ENCODE measurements at regions of chr12 and their contacts with region 1.

Region 1: GRCh38 chr12:76348079-76348901 is at the start of gene BBS10:
- DNase-seq: peak; percentile 92
- H3K4me3 Mint-ChIP-seq: peak within 1 kb of the TSS; percentile 86
- H3K27ac Mint-ChIP-seq: peak within 1 kb of the TSS; percentile 39
- H3K4me1 Mint-ChIP-seq: peaks cover 17% of the 10 kb centered on the region
- H3K27me3 Mint-ChIP-seq: no peaks in the 10 kb centered on the region
- CTCF ChIP-seq: peak; percentile 40
- total RNA-seq, gene BBS10: 5.9 and 10.2 TPM in 2 replicates

Region 2: DNA sequence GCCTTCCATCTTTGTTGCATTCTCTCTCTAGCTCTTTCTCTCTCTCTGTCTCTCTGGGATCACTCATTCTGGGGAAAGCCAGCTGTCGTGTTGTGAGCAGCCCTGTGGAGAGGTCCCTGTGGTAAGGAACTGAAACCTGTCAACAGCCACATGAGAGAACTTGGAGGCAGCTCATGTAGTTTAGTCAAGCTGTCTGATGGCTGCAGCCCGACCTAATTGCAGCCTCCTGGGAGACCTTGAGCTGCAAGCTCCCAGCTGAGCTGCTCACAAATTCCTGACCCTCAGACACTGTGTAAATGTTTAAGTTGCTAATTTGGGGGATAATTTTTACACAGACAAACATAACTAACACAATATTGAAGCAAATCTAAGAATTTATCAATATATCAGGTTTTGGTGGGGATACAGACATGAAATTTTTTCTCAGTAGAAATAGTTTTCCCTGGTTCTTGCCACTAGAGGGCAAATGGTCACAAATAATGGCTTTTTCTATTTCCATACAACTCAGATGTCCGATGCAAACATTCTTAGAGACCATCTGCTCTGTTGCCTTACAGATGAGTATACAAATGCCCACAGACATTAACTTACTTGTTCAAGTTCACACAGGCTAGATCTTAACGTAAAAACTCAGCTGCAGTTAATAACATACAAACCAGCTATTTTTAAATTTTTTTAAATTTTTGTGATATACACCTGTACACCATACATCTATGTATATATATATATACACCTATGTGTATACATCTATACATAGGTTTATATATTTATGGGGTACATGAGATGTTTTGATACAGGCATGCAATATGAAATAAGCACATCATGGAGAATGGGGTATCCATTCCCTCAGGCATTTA is 821.4 kb before region 1 on chr12:
- CTCF ChIA-PET with region 1: interaction called, 13 read pairs
- POLR2A ChIA-PET with region 1: interaction called, 3 read pairs
- intact Hi-C with region 1: loop called (anchors 1 kb)
- DNase-seq: peak; percentile 59
- H3K4me3 Mint-ChIP-seq: no peak overlapping the region
- H3K27ac Mint-ChIP-seq: no peak overlapping the region
- H3K4me1 Mint-ChIP-seq: no peaks in the 10 kb centered on the region
- H3K27me3 Mint-ChIP-seq: no peaks in the 10 kb centered on the region
- CTCF ChIP-seq: peak; percentile 55

Region 3: DNA sequence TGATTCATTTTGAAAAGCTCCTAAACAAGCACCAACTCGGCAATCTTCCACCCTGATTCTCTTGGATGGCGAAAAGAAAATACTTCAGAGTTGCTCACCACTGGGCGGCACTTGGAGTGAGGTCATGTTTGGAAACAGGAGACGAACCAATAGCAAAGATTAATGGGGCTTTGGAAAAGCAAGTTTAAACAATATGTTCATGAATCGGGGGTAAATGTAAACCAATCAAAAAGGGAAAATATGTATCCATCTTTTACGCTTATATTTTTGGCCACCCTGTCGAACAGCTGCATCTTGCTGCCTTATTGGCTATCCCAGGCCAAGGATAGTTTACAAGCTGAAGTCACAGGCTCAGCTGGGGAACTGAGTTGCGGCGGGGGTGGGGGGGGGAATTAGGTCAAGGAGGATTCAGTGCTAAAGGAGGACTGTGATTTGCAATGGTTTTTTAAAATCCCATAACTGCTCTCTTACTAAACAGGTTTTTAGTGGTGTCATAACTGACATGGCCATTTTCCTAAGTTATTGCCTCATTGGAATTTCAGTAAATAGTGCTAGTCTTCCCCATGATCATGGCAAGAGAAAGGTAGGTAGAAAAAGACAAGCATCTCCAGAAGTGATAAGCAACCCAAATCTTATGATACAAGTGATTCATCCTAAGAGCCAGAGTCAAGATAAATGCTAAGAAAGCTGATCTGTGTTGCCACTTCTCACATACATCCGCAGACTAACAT is 527.3 kb before region 1 on chr12:
- CTCF ChIA-PET with region 1: interaction called, 4 read pairs
- POLR2A ChIA-PET with region 1: no interaction called
- intact Hi-C with region 1: loop called (anchors 1 kb)
- DNase-seq: peak; percentile 84
- H3K4me3 Mint-ChIP-seq: no peak overlapping the region
- H3K27ac Mint-ChIP-seq: no peak overlapping the region
- H3K4me1 Mint-ChIP-seq: peaks cover 17% of the 10 kb centered on the region
- H3K27me3 Mint-ChIP-seq: no peaks in the 10 kb centered on the region
- CTCF ChIP-seq: peak; percentile 21

Region 4: GRCh38 chr12:76083904-76084862 is 264.1 kb before region 1 on chr12 and contains the start of gene NAP1L1:
- CTCF ChIA-PET with region 1: interaction called, 10 read pairs
- POLR2A ChIA-PET with region 1: interaction called, 50 read pairs
- intact Hi-C with region 1: loop called (anchors 1 kb)
- DNase-seq: peak; percentile 98
- H3K4me3 Mint-ChIP-seq: peak within 1 kb of the TSS; percentile 86
- H3K27ac Mint-ChIP-seq: peak within 1 kb of the TSS; percentile 86
- H3K4me1 Mint-ChIP-seq: peaks cover 20% of the 10 kb centered on the region
- H3K27me3 Mint-ChIP-seq: no peaks in the 10 kb centered on the region
- CTCF ChIP-seq: no peak
- total RNA-seq, gene NAP1L1: 327 and 493 TPM in 2 replicates

Region 5: GRCh38 chr12:76266797-76267196 is 81.5 kb before region 1 on chr12:
- CTCF ChIA-PET with region 1: interaction called, 4 read pairs
- POLR2A ChIA-PET with region 1: interaction called, 16 read pairs
- intact Hi-C with region 1: no loop called
- DNase-seq: peak; percentile 74
- H3K4me3 Mint-ChIP-seq: peak overlapping the region; percentile 41
- H3K27ac Mint-ChIP-seq: peak overlapping the region; percentile 91
- H3K4me1 Mint-ChIP-seq: peaks cover 43% of the 10 kb centered on the region
- H3K27me3 Mint-ChIP-seq: no peaks in the 10 kb centered on the region
- CTCF ChIP-seq: no peak

Region 6: DNA sequence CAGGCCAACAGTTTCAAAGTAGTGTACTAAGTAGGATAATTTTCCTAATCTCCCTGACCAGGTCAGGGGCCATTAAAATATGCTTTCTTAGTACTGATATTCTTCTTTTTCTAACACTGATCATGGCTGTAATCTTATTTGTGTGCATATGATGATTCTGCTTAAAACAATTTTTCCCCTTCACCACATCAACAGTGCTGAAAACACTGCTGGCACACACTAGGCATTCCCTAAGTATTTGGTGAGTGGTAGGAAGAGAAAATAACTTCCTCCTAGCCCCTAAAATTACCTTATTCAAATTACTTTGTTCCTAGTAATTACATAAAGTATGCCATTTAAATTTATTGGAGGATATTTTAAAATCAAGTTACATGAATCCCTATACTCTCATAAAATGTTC is 49.8 kb after region 1 on chr12:
- CTCF ChIA-PET with region 1: no interaction called
- POLR2A ChIA-PET with region 1: no interaction called
- intact Hi-C with region 1: no loop called
- DNase-seq: no peak
- H3K4me3 Mint-ChIP-seq: no peak overlapping the region
- H3K27ac Mint-ChIP-seq: no peak overlapping the region
- H3K4me1 Mint-ChIP-seq: no peaks in the 10 kb centered on the region
- H3K27me3 Mint-ChIP-seq: no peaks in the 10 kb centered on the region
- CTCF ChIP-seq: no peak

Region 7: GRCh38 chr12:76586764-76587395 is 238.6 kb after region 1 on chr12:
- CTCF ChIA-PET with region 1: interaction called, 33 read pairs
- POLR2A ChIA-PET with region 1: interaction called, 11 read pairs
- intact Hi-C with region 1: loop called (anchors 1 kb)
- DNase-seq: peak; percentile 61
- H3K4me3 Mint-ChIP-seq: no peak overlapping the region
- H3K27ac Mint-ChIP-seq: peak overlapping the region; percentile 79
- H3K4me1 Mint-ChIP-seq: peaks cover 35% of the 10 kb centered on the region
- H3K27me3 Mint-ChIP-seq: no peaks in the 10 kb centered on the region
- CTCF ChIP-seq: peak; percentile 65

Measured in MCF 10A (cell line).